ENCODE measurements at regions of chr1 and their contacts with region 1.

Region 1: GRCh38 chr1:9573723-9574122 is 15.0 kb upstream of the TMEM201 start:
- DNase-seq: no peak
- H3K4me3 ChIP-seq: no peak overlapping the region
- H3K27ac ChIP-seq: no peak overlapping the region
- H3K4me1 ChIP-seq: no peaks in the 10 kb centered on the region
- H3K27me3 ChIP-seq: no peaks in the 10 kb centered on the region
- CTCF ChIP-seq: peak; percentile 21 to 55 (median 38)
- EP300 ChIP-seq: no peak
- POLR2A ChIP-seq: no peak

Region 2: DNA sequence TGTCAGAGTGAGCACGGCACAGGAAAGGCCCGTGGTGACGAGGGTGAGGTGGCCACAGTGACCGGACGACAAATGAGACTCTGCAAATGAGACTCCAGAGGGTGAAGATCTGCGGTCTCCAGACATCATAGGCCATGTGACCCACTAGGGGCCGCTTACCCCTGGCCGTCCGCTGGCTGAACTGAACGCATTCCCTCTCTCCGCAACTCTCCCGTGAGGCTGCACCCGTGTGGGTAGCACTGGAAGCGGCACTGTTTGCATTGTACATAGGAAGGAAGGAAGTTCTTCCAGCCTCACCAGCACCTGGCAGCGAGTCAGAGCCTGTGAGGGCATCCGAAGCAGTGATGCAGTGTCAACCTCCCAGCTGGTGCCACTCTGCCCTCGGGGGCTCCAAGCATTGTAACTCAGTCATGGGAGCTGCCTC is 304.6 kb before region 1 on chr1:
- in situ Hi-C with region 1: no loop called
- intact Hi-C with region 1: loop called (anchors 10 kb)
- DNase-seq: no peak
- H3K4me3 ChIP-seq: no peak overlapping the region
- H3K27ac ChIP-seq: no peak overlapping the region
- H3K4me1 ChIP-seq: peaks cover 0 to 17% (median 10%) of the 10 kb centered on the region in 4 donors
- H3K27me3 ChIP-seq: no peaks in the 10 kb centered on the region
- CTCF ChIP-seq: no peak
- EP300 ChIP-seq: no peak
- POLR2A ChIP-seq: no peak

Region 3: GRCh38 chr1:9371391-9371935 is 202.3 kb before region 1 on chr1:
- in situ Hi-C with region 1: no loop called
- intact Hi-C with region 1: no loop called
- DNase-seq: peak; percentile 54
- H3K4me3 ChIP-seq: no peak overlapping the region
- H3K27ac ChIP-seq: peak overlapping the region; percentile 87 to 91 (median 88)
- H3K4me1 ChIP-seq: peaks cover 44 to 56% (median 50%) of the 10 kb centered on the region in 4 donors
- H3K27me3 ChIP-seq: no peaks in the 10 kb centered on the region
- CTCF ChIP-seq: no peak
- EP300 ChIP-seq: no peak
- POLR2A ChIP-seq: peak; percentile 14

Region 4: DNA sequence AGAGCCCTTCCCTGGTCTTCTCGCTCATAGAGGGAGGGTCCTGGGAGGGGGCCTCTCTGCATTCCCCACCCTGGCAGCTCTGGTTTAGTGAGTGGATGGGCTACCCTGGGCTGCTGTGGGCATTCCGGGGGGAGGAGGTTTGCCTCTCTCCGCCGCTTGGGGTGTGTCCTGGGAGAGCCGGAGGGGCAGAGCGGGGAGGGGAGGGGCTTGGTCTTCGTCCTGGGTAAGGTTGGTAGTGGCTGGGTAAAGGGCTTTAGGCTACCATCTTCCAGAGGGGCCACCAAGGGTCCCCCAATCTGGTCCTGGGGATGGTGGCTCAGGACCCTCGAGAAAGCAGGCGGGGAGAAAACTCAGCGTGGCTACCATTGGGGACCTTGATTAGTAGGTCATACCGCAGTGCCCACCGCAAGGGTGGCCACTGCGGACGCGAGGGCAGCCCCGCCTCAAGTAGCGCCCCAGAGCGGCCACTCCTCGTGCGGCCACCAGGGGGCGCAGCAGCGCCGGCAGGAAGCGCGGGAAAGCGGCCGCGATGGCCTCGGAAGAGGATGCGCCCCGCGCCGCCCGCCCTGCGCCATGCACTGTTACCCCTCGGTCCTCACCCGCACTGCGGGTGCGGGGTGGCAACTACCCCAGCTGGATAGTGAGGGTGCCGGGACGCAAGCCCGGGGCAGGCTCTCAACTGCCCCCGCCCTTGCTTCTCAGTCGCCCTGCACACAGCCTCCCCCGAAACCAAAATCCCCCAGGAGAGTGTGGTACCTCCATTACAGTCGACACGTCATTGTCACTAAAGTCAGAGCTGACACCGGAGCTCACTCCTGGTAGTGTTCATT is 78.6 kb before region 1 on chr1:
- in situ Hi-C with region 1: loop called in 3 of 4 experiments (anchors 5 to 10 kb)
- intact Hi-C with region 1: loop called (anchors 1 kb)
- DNase-seq: peak; percentile 58
- H3K4me3 ChIP-seq: peak overlapping the region in 1 of 4 donors; percentile 35
- H3K27ac ChIP-seq: no peak overlapping the region
- H3K4me1 ChIP-seq: peaks cover 3 to 13% (median 6%) of the 10 kb centered on the region in 4 donors
- H3K27me3 ChIP-seq: no peaks in the 10 kb centered on the region
- CTCF ChIP-seq: peak; percentile 90 to 99 (median 99)
- EP300 ChIP-seq: no peak
- POLR2A ChIP-seq: no peak

Region 5: DNA sequence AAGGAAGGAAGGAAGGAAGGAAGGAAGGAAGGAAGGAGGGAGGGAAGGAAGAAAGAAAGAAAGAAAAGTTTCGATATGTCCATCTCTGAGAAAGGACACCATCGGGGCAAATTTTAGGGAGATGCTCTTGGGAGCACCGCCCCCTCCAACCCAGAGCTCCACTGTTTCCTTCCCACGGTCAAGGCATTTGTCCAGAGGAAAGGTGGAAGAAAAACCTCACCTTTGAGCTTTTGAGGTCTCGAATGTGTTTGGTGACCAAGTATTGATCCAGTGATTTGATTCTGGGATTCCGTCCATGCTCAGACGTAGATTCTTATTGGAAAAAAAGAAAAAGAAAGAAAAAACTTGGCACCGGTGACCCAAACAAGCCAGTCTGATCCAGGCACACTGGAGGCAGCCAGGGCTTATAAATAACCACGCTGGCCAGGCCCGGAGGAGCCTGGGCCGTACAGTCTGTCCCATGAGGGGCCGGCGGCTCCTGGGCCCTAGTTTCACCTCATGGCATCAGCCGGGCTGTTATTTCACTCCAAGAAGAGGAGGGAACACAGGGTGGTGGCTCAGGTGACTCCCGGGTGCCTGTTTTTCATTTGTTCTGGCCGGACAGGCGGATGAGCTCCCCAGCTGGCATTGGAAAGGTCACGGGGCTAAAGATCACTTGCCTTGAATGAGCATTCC is 70.6 kb before region 1 on chr1:
- in situ Hi-C with region 1: loop called in 3 of 4 experiments (anchors 5 to 10 kb)
- intact Hi-C with region 1: no loop called
- DNase-seq: no peak
- H3K4me3 ChIP-seq: no peak overlapping the region
- H3K27ac ChIP-seq: no peak overlapping the region
- H3K4me1 ChIP-seq: no peaks in the 10 kb centered on the region
- H3K27me3 ChIP-seq: no peaks in the 10 kb centered on the region
- CTCF ChIP-seq: no peak
- EP300 ChIP-seq: no peak
- POLR2A ChIP-seq: no peak

Region 6: GRCh38 chr1:9842781-9843577 is 269.3 kb after region 1 on chr1:
- in situ Hi-C with region 1: no loop called
- intact Hi-C with region 1: no loop called
- DNase-seq: peak; percentile 63
- H3K4me3 ChIP-seq: no peak overlapping the region
- H3K27ac ChIP-seq: peak overlapping the region; percentile 6 to 76 (median 60)
- H3K4me1 ChIP-seq: peaks cover 0 to 39% (median 27%) of the 10 kb centered on the region in 4 donors
- H3K27me3 ChIP-seq: no peaks in the 10 kb centered on the region
- CTCF ChIP-seq: no peak
- EP300 ChIP-seq: no peak
- POLR2A ChIP-seq: no peak

Region 7: GRCh38 chr1:9929431-9930385 is 356.0 kb after region 1 on chr1:
- in situ Hi-C with region 1: no loop called
- intact Hi-C with region 1: no loop called
- DNase-seq: no peak
- H3K4me3 ChIP-seq: no peak overlapping the region
- H3K27ac ChIP-seq: no peak overlapping the region
- H3K4me1 ChIP-seq: peaks cover 0 to 8% (median 0%) of the 10 kb centered on the region in 4 donors
- H3K27me3 ChIP-seq: no peaks in the 10 kb centered on the region
- CTCF ChIP-seq: no peak
- EP300 ChIP-seq: no peak
- POLR2A ChIP-seq: no peak